CD14-positive monocyte (primary cell): ENCODE measurements at regions of chr5 and their contacts with region 1.

Region 1: DNA sequence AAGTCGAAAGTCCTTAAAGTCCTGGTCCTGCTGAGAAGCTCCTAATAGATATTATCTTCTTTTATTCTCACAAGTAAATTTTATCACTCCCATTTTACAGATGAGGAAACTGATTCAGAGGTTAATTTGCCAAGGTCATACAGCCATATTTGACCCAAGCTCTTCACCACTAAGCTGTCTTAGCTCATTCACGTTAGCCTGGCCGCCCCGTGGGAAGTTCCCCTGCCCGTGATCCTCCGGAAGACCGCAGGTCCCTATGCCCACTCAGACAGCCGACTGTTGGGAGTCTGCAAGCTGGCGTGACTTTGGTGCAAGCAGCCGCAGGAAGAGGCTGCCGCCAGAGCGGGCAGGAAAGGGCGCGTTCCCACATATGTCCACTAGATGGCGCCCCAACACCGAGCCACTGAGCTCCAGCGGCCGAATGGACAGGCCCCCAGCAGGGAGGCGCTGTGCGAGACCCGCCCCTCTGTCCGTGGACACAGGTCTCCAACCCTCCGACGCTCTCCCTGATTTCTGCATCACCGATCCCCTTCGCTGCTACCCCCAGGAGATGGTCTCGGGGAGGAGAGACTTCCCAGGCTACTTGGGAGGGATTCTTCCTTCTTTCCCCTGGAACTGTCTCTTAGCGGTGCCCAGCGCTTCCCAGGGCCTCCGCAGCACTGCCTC is 10.0 kb upstream of the ARAP3 start:
- DNase-seq: peak; percentile 73 to 84 (median 82)
- H3K4me3 ChIP-seq: peak overlapping the region in 1 of 3 experiments; percentile 58
- H3K4me3 Mint-ChIP-seq: peak overlapping the region; percentile 74 to 80
- H3K27ac ChIP-seq: no peak overlapping the region
- H3K27ac Mint-ChIP-seq: peak overlapping the region in 1 of 7 donors; percentile 41
- H3K4me1 ChIP-seq: peaks cover 14% of the 10 kb centered on the region in 2 donors
- H3K4me1 Mint-ChIP-seq: peaks cover 18% of the 10 kb centered on the region
- H3K27me3 ChIP-seq: peaks cover 0 to 2% of the 10 kb centered on the region in 2 donors
- H3K27me3 Mint-ChIP-seq: peaks cover 6 to 13% (median 13%) of the 10 kb centered on the region in 3 donors
- CTCF ChIP-seq: peak; percentile 98

Region 2: GRCh38 chr5:140524003-140524402 is 1168.0 kb before region 1 on chr5:
- intact Hi-C with region 1: no loop called
- DNase-seq: no peak
- H3K4me3 ChIP-seq: no peak overlapping the region
- H3K4me3 Mint-ChIP-seq: no peak overlapping the region
- H3K27ac ChIP-seq: peak overlapping the region in 1 of 2 donors; percentile 48
- H3K27ac Mint-ChIP-seq: peak overlapping the region in 2 of 7 donors; percentile 6 to 84
- H3K4me1 ChIP-seq: peaks cover 4 to 6% of the 10 kb centered on the region in 2 donors
- H3K4me1 Mint-ChIP-seq: peaks cover 4% of the 10 kb centered on the region
- H3K27me3 ChIP-seq: no peaks in the 10 kb centered on the region
- H3K27me3 Mint-ChIP-seq: peaks cover 0 to 1% (median 0%) of the 10 kb centered on the region in 3 donors
- CTCF ChIP-seq: no peak

Region 3: GRCh38 chr5:141811287-141812155 is 119.5 kb after region 1 on chr5:
- intact Hi-C with region 1: loop called (anchors 10 kb)
- DNase-seq: peak in 2 of 3 donors; percentile 17 to 25
- H3K4me3 ChIP-seq: no peak overlapping the region
- H3K4me3 Mint-ChIP-seq: peak overlapping the region; percentile 11 to 24
- H3K27ac ChIP-seq: no peak overlapping the region
- H3K27ac Mint-ChIP-seq: no peak overlapping the region
- H3K4me1 ChIP-seq: no peaks in the 10 kb centered on the region
- H3K4me1 Mint-ChIP-seq: no peaks in the 10 kb centered on the region
- H3K27me3 ChIP-seq: peaks cover 2 to 29% of the 10 kb centered on the region in 2 donors
- H3K27me3 Mint-ChIP-seq: peaks cover 30 to 48% (median 46%) of the 10 kb centered on the region in 3 donors
- CTCF ChIP-seq: peak; percentile 63

Region 4: DNA sequence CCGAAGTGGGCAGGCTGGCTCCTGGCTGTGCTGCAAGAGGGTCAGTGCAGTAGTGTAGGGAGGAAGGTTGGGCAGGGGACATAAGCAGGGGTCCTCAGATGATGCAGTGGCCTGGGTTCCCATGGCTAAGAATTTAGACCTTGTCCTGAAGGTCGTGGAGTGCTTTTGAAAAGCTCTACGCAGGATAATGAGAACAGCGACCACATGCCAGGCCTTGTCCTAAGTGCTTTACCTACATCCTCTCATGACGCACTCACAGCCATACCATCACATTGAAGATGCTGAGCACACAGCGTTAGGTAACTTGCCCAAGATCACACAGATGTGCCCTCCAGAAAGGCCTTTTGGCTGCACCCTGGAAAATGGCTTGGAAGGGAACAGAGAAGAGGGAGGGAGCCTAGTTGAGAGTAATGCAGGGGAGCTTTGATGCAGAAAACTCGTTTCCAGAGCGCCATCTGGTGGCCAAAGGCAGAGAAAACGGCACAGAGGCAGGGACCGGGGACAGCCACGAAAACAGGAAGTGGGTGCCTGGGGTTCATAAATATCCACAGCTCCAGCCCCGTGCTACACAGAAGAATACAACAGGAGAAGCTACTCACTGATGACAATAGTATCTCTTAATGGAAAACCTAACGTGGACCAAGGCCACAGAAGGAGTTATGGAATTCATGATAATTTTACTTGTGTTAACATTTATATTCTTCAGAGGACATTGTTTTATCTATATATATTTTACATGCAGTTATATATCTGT is 268.6 kb after region 1 on chr5:
- intact Hi-C with region 1: loop called (anchors 5 kb)
- DNase-seq: peak; percentile 88 to 90 (median 89)
- H3K4me3 ChIP-seq: no peak overlapping the region
- H3K4me3 Mint-ChIP-seq: no peak overlapping the region
- H3K27ac ChIP-seq: no peak overlapping the region
- H3K27ac Mint-ChIP-seq: peak overlapping the region in 3 of 7 donors; percentile 4 to 85 (median 44)
- H3K4me1 ChIP-seq: peaks cover 28 to 42% of the 10 kb centered on the region in 2 donors
- H3K4me1 Mint-ChIP-seq: peaks cover 43% of the 10 kb centered on the region
- H3K27me3 ChIP-seq: no peaks in the 10 kb centered on the region
- H3K27me3 Mint-ChIP-seq: peaks cover 2 to 7% (median 4%) of the 10 kb centered on the region in 3 donors
- CTCF ChIP-seq: peak; percentile 90

Region 5: GRCh38 chr5:142145106-142145900 is 453.3 kb after region 1 on chr5:
- intact Hi-C with region 1: loop called (anchors 10 kb)
- DNase-seq: peak; percentile 27 to 54 (median 47)
- H3K4me3 ChIP-seq: no peak overlapping the region
- H3K4me3 Mint-ChIP-seq: no peak overlapping the region
- H3K27ac ChIP-seq: no peak overlapping the region
- H3K27ac Mint-ChIP-seq: no peak overlapping the region
- H3K4me1 ChIP-seq: no peaks in the 10 kb centered on the region
- H3K4me1 Mint-ChIP-seq: no peaks in the 10 kb centered on the region
- H3K27me3 ChIP-seq: no peaks in the 10 kb centered on the region
- H3K27me3 Mint-ChIP-seq: no peaks in the 10 kb centered on the region
- CTCF ChIP-seq: peak; percentile 78